ENCODE measurements at regions of chr12 and their contacts with region 1.

Region 1: GRCh38 chr12:12266873-12267741 is at the start of gene LRP6:
- DNase-seq: peak; percentile 74 to 95
- H3K4me3 ChIP-seq: peak within 1 kb of the TSS; percentile 77
- H3K27ac ChIP-seq: peak within 1 kb of the TSS; percentile 85
- H3K4me1 ChIP-seq: peaks cover 23% of the 10 kb centered on the region
- H3K27me3 ChIP-seq: no peaks in the 10 kb centered on the region
- CTCF ChIP-seq: no peak
- total RNA-seq, gene LRP6: 45.5 and 60.0 TPM in 2 replicates

Region 2: DNA sequence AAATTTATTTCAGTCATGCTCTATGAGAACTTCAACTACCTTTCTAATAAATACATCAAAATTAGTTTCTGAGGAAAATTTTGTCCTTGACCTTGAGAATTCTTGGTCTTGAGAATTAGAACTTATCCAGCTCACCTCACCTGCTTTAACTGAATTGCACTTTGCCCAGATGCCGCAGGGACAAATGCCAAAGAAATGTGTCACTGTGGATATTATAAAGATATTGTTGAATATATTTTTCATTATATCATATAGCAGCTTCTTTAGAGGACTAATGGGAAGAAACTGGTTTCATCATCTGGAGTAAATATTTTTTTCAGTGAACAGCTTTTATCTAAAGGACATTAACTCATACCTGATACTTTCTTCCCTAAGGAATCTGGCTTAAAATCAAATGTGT is 54.3 kb before region 1 on chr12:
- CTCF ChIA-PET with region 1: no interaction called
- POLR2A ChIA-PET with region 1: interaction called, 10 read pairs
- intact Hi-C with region 1: no loop called
- DNase-seq: peak; percentile 29 to 59
- H3K4me3 ChIP-seq: no peak overlapping the region
- H3K27ac ChIP-seq: no peak overlapping the region
- H3K4me1 ChIP-seq: peaks cover 10% of the 10 kb centered on the region
- H3K27me3 ChIP-seq: no peaks in the 10 kb centered on the region
- CTCF ChIP-seq: no peak

Region 3: DNA sequence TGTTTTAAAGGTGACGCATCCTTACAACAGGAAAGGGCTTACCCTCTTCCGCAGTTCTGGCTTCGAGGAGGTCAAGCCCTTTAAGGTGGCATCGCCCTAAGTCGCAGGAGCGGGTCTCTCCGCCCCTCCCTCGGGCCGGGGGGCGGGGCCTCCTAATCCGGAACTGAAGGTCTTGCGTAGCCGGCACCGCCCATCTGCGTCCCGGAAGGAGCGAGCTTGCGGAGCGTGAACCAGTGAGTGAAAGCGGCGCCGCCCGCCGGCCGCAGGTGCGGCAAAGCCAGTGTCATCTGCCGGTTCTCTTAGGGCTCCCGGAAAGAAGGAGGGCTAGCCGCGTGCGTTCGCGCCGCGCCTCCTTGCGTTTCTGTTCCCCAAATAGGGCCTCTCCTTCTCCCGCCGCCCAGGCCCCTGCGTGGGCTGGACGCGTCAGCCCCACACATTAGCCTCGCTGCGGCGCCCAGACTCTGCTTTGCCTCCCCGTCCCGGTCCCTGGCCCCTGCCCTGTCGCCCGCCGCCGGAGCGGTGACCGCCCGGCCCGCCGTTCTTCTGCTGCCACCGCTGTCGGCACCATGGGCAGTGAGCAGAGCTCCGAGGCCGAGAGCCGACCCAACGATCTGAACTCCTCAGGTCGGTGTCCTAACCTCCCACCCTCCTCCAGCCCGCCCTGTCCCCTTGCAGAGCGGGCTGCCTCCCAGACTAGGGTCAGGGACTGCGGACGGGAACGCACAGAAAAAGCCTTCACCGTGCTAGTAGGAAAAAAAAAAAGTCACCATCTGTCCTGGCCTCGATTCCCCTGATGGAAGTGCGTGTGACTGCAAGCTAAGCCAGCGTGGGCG is 90.0 kb after region 1 on chr12 and contains the start of gene BORCS5:
- CTCF ChIA-PET with region 1: no interaction called
- POLR2A ChIA-PET with region 1: no interaction called
- intact Hi-C with region 1: loop called (anchors 2 kb)
- DNase-seq: peak; percentile 94 to 99
- H3K4me3 ChIP-seq: peak within 1 kb of the TSS; percentile 70
- H3K27ac ChIP-seq: peak within 1 kb of the TSS; percentile 73
- H3K4me1 ChIP-seq: peaks cover 19% of the 10 kb centered on the region
- H3K27me3 ChIP-seq: no peaks in the 10 kb centered on the region
- CTCF ChIP-seq: no peak
- total RNA-seq, gene BORCS5: 18.2 and 19.7 TPM in 2 replicates

Region 4: DNA sequence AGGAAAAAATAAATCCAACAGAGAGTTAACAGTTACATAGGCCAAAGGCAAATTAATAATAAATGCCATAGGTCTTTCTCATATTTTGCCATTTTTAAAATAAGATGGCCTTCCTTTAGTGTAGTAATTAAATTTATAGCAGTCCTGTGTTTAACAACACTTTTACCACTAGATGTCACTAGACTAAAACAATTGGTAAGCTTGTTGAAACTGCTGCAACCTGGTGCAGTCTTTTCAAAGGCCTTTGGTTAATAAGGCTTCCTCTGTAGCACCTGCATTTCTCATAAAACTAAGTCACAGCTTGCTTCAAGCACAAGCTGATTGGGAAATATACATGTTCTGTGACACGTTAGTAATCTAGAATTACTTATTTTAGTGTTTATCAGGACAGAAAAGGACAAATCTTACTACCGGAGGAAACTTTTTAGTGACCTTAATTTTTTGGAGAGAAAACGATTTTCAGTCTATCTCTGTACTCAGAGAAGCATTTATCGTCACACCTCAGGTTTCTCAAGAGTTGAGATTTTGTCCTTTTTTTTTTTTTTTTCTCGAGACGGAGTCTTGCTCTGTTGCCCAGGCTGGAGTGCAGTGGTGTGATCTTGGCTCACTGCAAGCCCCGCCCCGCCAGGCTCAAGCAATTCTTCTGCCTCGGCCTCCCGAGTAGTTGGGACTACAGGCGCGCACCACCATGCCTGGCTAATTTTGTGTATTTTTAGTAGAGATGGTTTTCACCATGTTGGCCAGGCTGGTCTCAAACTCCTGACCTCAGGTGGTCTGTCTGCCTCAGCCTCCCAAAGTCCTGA is 109.7 kb after region 1 on chr12:
- CTCF ChIA-PET with region 1: no interaction called
- POLR2A ChIA-PET with region 1: no interaction called
- intact Hi-C with region 1: no loop called
- DNase-seq: peak in 1 of 2 experiments; percentile 80
- H3K4me3 ChIP-seq: no peak overlapping the region
- H3K27ac ChIP-seq: no peak overlapping the region
- H3K4me1 ChIP-seq: no peaks in the 10 kb centered on the region
- H3K27me3 ChIP-seq: no peaks in the 10 kb centered on the region
- CTCF ChIP-seq: peak; percentile 87

Region 5: DNA sequence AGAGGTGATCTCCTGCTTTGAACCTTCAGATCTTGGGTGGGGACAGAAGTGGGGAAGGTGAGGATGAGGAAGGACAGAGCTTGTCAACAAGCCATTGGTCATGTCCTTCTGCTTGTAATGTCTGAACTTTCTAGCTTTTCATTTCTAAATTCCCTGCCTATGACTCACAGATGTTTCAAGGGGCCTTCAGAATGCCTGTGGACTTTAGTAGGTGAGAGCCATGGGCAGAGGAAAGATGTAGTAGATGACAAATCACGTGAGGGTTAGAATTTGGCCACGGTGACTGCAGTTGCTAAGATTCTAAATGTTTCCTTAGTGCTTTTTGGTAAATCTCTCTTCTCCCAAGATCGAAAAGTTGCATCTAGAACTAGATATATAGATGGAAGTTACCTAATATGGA is 325.8 kb after region 1 on chr12:
- CTCF ChIA-PET with region 1: no interaction called
- POLR2A ChIA-PET with region 1: no interaction called
- intact Hi-C with region 1: no loop called
- DNase-seq: peak; percentile 40 to 73
- H3K4me3 ChIP-seq: no peak overlapping the region
- H3K27ac ChIP-seq: peak overlapping the region; percentile 33; the same call in 1 of the 2 replicates
- H3K4me1 ChIP-seq: peaks cover 28% of the 10 kb centered on the region
- H3K27me3 ChIP-seq: no peaks in the 10 kb centered on the region
- CTCF ChIP-seq: no peak